Mammary epithelial cell (primary cell): ENCODE measurements at regions of chr1 and their contacts with region 1.

Region 1: DNA sequence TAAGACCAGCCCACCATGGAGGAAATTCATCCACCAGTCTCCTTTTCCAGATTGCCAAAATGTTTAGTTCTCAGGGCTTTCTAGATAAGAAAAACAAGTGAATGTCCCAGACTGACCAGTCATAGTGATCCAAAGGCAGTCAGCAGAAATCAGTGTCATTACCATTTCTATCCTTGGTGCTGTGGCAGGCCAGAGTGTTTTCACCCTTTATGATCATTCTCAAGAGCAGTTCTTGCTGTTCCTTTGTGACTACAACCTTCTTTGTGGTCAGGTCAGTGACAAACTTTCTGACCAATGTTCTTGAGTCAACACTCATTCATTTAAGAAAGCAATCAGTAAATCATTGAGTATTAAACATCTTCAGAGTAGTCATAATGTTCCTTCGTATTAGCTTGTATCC is 7.3 kb upstream of the DHCR24 start:
- DNase-seq: no peak
- H3K4me3 ChIP-seq: no peak overlapping the region
- H3K27ac ChIP-seq: no peak overlapping the region
- H3K4me1 ChIP-seq: no peaks in the 10 kb centered on the region
- H3K27me3 ChIP-seq: no peaks in the 10 kb centered on the region
- CTCF ChIP-seq: no peak

Region 2: DNA sequence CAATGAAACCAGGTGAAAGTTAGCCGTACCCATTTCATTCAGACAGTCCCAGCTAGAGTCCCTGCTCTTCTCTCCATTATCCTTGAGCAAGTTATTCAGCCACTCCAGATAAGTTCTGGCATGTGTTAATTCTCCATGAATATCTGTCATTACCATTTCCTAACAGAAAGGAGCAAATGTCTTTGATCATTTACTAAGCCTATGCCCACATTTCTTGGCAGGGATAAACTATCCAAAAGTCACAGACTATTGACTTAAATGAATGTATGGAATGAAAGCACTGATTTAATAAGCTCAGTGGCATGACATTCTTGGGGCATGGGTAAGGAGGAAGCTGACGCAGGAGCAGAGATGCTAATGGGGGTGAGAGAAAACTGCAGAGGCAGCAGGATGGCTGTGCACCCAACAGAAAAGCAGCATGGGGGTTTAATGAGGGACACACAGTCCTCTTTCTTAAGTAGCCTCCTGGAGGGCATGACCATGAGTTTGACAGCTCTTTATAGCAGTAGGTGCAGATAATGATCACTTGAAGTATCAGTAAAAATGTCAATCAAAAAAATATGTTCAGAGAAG is 10.3 kb after region 1 on chr1:
- CTCF ChIA-PET with region 1: interaction called, 22 read pairs
- dilution Hi-C with region 1: no loop called
- in situ Hi-C with region 1: no loop called
- intact Hi-C with region 1: no loop called
- DNase-seq: peak; percentile 70
- H3K4me3 ChIP-seq: no peak overlapping the region
- H3K27ac ChIP-seq: no peak overlapping the region
- H3K4me1 ChIP-seq: peaks cover 21% of the 10 kb centered on the region
- H3K27me3 ChIP-seq: no peaks in the 10 kb centered on the region
- CTCF ChIP-seq: no peak